ENCODE measurements at regions of chr12 and their contacts with region 1.

Region 1: DNA sequence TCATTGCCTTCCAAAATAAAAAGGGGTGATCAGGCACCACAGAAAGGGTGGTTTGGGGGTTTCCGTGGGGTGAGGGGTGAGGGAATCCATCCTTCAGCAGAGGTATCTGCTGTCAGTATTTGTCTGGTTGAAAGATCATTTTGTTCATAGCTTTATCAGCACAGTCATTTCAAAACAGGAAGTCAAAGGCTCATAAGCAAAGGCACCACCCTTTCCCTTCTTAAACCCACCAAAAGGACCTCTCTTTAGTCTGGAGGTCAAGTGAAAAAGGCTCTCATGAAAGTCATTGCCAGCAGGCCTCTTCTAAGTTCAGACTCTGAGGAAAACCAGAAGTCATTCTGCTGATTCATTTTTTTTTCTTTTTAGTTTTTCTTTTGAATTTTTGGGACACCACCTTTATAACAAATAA is 6.2 kb downstream of the CHST11 start:
- DNase-seq: peak; percentile 58
- H3K4me3 Mint-ChIP-seq: peak overlapping the region; percentile 74
- H3K27ac Mint-ChIP-seq: peak overlapping the region; percentile 92
- H3K4me1 Mint-ChIP-seq: peaks cover 68% of the 10 kb centered on the region
- H3K27me3 Mint-ChIP-seq: no peaks in the 10 kb centered on the region

Region 2: DNA sequence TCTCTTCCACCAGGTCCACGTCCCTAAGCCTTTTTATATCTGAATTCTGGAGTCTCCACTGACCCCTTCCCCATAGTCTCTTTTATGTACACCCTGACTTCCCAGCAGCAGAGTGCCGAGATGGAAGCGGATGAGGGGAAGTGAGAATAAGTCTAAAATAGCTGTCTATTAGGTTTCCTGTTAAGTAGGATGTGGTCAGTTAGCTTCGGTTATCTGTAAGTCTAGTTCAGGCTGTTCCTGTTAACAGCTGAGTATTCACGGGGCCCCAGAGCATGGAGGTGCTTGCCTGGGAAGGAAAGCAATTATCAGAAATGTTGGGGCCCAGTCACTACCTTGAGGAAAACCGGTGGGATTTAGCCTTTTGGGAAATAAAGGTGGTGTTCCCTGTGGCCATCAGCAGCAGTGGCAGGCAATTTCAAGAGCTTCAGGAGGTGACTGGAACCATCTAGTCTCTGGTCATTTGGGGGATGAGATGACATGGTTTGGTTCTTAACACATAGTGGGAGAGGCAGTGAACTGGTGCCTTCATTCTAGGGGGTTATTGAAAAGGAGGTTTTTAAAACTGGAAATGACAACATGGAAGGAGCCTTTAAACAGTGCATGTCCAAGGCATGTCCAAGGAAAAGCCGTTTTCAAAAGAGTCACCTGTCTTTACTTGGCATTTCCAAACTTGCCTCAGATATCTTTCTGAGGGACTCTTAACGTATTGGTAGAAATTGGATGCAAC is 15.6 kb after region 1 on chr12:
- intact Hi-C with region 1: loop called (anchors 2 kb)
- DNase-seq: no peak
- H3K4me3 Mint-ChIP-seq: peak overlapping the region; percentile 83
- H3K27ac Mint-ChIP-seq: peak overlapping the region; percentile 96
- H3K4me1 Mint-ChIP-seq: peaks cover 80% of the 10 kb centered on the region
- H3K27me3 Mint-ChIP-seq: no peaks in the 10 kb centered on the region

Region 3: GRCh38 chr12:104505095-104505818 is 42.3 kb after region 1 on chr12:
- intact Hi-C with region 1: no loop called
- DNase-seq: no peak
- H3K4me3 Mint-ChIP-seq: no peak overlapping the region
- H3K27ac Mint-ChIP-seq: no peak overlapping the region
- H3K4me1 Mint-ChIP-seq: peaks cover 79% of the 10 kb centered on the region
- H3K27me3 Mint-ChIP-seq: no peaks in the 10 kb centered on the region

Region 4: GRCh38 chr12:104569346-104570173 is 106.6 kb after region 1 on chr12:
- intact Hi-C with region 1: loop called (anchors 1 kb)
- DNase-seq: peak; percentile 51
- H3K4me3 Mint-ChIP-seq: peak overlapping the region; percentile 61
- H3K27ac Mint-ChIP-seq: peak overlapping the region; percentile 71
- H3K4me1 Mint-ChIP-seq: peaks cover 54% of the 10 kb centered on the region
- H3K27me3 Mint-ChIP-seq: no peaks in the 10 kb centered on the region

Region 5: GRCh38 chr12:104763168-104763805 is 300.4 kb after region 1 on chr12:
- intact Hi-C with region 1: loop called (anchors 5 kb)
- DNase-seq: no peak
- H3K4me3 Mint-ChIP-seq: peak overlapping the region; percentile 20
- H3K27ac Mint-ChIP-seq: peak overlapping the region; percentile 76
- H3K4me1 Mint-ChIP-seq: peaks cover 22% of the 10 kb centered on the region
- H3K27me3 Mint-ChIP-seq: no peaks in the 10 kb centered on the region

Measured in activated T-helper 2 cell treated with anti-CD3 and anti-CD28 coated beads, Interferon-gamma antibody, Interleukin-2, Interleukin-4, amounts not matched to agents 10 μg/mL and 5 μg/mL and 100 μg/mL, durations not matched to agents 14 hours and 24 hours and 36 hours (primary cell).